ENCODE measurements at regions of chr5 and their contacts with region 1.

Region 1: DNA sequence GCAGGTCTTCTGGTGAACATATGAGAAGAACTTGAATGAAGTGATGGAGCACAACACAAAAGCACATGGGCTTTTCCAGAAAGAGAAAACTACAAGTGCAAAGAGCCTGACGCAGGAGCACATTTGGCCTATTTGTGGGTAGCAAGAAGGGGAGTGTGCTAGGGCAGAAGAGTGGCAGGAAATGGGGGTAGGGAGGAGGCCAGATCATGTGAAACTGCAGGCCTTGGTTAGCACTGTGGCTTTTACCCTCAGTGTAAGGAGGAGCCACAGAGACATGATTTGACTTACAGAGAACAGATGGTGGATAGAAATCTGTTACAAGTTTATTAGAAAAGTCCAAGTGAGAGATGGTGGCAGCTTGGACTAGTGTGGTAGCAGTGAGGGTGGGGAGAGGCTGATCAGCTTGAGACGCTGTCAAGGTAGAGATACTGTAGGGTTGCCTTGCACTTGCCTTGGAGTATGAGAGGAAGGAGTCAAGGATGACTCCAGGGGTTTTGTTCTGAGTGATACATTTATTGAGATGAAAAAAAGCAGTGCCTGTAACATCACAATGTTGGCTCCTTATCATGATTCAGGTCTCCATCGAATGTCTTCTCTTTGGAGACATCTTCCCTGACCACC is 126.7 kb downstream of the PPP2R2B start:
- DNase-seq: peak; percentile 65
- H3K4me3 Mint-ChIP-seq: no peak overlapping the region
- H3K27ac Mint-ChIP-seq: peak overlapping the region; percentile 74
- H3K4me1 Mint-ChIP-seq: peaks cover 39% of the 10 kb centered on the region
- H3K27me3 Mint-ChIP-seq: no peaks in the 10 kb centered on the region

Region 2: GRCh38 chr5:146794326-146795029 is 42.6 kb after region 1 on chr5:
- CTCF ChIA-PET with region 1: no interaction called
- POLR2A ChIA-PET with region 1: no interaction called
- intact Hi-C with region 1: loop called (anchors 5 kb)
- DNase-seq: no peak
- H3K4me3 Mint-ChIP-seq: no peak overlapping the region
- H3K27ac Mint-ChIP-seq: no peak overlapping the region
- H3K4me1 Mint-ChIP-seq: peaks cover 7% of the 10 kb centered on the region
- H3K27me3 Mint-ChIP-seq: no peaks in the 10 kb centered on the region

Region 3: GRCh38 chr5:146878476-146879172 is 126.7 kb after region 1 on chr5 and contains the start of gene PPP2R2B:
- CTCF ChIA-PET with region 1: no interaction called
- POLR2A ChIA-PET with region 1: no interaction called
- intact Hi-C with region 1: loop called (anchors 5 kb)
- DNase-seq: peak; percentile 56
- H3K4me3 Mint-ChIP-seq: peak within 1 kb of the TSS; percentile 78
- H3K27ac Mint-ChIP-seq: no peak within 1 kb of the TSS
- H3K4me1 Mint-ChIP-seq: peaks cover 15% of the 10 kb centered on the region
- H3K27me3 Mint-ChIP-seq: peaks cover 25% of the 10 kb centered on the region
- total RNA-seq, gene PPP2R2B: 1.0 to 1.1 TPM

Measured in activated CD4-positive, alpha-beta memory T cell treated with anti-CD3 and anti-CD28 coated beads for 36 hours (primary cell).